Sciatic nerve (tissue), 2 donors: ENCODE measurements at regions of chr9 and their contacts with region 1.

Region 1: GRCh38 chr9:90659650-90660364 is 17.2 kb upstream of the DIRAS2 start:
- DNase-seq: no peak
- ATAC-seq: no peak

Region 2: DNA sequence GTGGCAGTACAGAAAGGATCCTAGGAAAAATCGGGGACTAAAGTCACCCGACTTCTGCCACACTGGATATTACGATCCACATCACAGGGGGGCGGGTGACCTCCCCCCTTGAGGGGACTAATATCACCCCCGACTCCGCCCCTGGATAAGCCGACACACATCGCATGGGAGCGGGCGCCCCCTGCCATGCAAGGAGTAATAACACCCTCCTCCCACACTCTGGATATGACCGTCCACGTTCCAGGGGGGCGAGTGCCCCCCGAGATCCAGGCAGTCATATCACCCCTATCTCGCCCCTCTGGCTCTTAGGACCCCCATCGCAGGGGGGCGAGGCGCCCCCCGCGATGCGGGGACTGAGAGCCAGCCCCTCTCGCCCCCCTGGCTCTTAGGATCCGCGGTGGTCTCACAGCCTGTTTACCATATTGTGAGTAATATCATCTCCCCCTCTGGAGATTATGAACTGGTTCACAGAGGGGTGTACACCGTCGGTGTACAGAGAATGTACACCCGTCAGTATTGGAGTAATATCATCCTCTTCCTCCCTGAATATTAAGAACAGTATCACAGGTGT is 440.2 kb before region 1 on chr9:
- intact Hi-C with region 1: loop called (anchors 5 kb)
- DNase-seq: no peak
- ATAC-seq: no peak

Region 3: DNA sequence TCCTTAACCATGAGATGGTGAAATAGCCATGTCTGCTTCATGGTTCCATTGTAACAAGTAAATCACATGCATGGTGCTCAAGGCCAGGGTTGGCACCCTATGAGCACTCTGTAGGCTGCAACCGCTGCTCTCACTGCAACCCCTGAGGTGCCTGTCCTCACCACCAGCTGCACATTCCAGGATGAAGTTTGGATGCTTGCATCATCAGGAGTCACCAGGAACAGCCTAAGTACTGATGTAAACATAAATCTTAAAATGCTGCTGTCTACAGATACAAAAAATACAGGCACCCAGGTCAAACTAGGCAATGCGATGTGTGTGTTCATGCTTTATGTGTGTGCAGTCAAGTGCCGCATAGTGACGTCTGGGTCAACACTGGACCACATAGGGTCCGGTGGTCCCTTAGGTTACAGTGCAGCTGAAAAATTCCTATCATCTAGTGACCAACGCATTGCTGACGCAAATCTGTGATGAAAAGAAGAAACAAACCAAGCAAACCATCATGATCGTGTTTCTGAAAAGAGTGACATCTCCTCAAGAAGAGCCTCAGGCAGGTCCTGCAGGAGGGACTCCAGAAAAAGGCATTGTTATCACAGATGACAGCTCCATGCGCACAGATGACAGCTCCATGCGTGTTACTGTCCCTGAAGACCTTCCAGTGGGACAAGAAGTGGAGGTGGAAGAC is 467.1 kb after region 1 on chr9:
- intact Hi-C with region 1: no loop called
- DNase-seq: no peak
- ATAC-seq: no peak